ENCODE measurements at regions of chr1 and their contacts with region 1.

Region 1: DNA sequence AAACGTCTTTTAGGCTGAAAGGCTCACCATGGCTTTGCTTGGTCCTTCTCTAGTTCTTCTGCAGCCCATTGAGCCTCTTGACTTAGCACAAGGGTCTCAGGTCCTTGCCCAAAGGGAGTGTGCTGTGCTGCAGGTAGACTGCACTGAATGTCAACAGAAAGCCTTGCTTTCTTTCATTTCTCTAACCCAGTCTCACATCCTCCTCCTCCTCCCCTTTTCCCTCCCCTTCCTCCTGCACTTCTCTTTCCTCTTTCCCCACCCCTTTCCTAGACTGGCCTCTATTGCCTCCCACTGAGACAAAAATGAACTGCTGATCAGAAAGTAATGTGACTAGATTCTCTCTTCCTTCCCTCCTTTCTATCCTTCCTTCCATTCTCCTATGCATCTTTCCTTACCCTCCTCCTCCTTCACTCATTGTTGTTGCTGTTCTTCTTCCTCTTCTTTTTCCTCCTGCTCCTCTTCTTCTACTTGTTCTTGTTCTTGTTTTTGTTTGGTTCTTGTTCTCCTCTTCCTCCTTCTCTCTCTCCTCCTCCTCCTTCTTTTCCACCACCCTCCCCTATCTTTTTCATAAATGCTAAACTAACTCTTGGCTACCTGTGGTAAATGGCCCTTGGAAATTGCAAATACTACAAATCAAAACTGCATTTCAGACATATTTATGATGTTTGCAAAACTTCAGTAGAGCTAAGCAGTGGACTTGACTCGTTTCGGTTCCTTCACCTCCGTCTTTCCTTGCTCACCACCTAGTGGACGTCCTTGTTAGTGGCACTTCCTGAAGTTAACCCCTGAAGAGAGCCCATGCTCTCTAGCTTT is at the start of gene SELL:
- DNase-seq: peak; percentile 48 to 81
- ATAC-seq: peak; percentile 99 to 100
- H3K4me3 ChIP-seq: peak within 1 kb of the TSS; percentile 13
- H3K27ac ChIP-seq: 0 out of 6 replicates have a peak within 1 kb of the TSS, but pooled peaks of 1 of the 2 experiments have one; percentile 11
- H3K4me1 ChIP-seq: no peaks in the 10 kb centered on the region
- CTCF ChIP-seq: peak; percentile 73
- EP300 ChIP-seq: no peak
- POLR2A ChIP-seq: no peak
- RAD21 ChIP-seq: peak; percentile 74 to 84
- polyA plus RNA-seq, gene SELL: 0.22 and 0.39 TPM in 2 replicates

Region 2: GRCh38 chr1:169601093-169601881 is 110.4 kb before region 1 on chr1:
- CTCF ChIA-PET with region 1: interaction called, 26 read pairs
- POLR2A ChIA-PET with region 1: no interaction called
- DNase-seq: peak; percentile 6 to 29
- ATAC-seq: peak; percentile 80; a peak in 4 of 6 replicates
- H3K4me3 ChIP-seq: no peak overlapping the region
- H3K27ac ChIP-seq: no peak overlapping the region
- H3K4me1 ChIP-seq: no peaks in the 10 kb centered on the region
- CTCF ChIP-seq: peak; percentile 59
- EP300 ChIP-seq: no peak
- POLR2A ChIP-seq: no peak
- RAD21 ChIP-seq: peak; percentile 54 to 62

Region 3: DNA sequence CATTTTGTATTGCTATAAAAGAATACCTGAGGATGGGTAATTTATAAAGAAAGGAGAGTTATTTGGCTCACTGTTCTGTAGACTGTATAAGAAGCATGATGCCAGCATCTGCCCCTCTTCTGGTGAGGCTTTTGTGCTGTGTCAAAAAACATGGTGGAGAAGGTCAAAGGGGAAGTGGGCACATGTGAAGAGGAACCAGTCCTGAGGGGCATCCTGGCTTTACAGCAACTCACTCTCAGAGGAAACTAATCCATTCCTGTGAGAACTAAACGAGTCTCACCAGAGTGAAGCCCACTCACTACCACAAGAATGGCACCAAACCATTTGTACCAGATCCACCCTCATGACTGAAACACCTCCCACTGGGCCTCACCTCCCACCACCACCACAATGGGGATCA is 63.0 kb before region 1 on chr1:
- CTCF ChIA-PET with region 1: no interaction called
- POLR2A ChIA-PET with region 1: no interaction called
- DNase-seq: no peak
- ATAC-seq: no peak
- H3K4me3 ChIP-seq: no peak overlapping the region
- H3K27ac ChIP-seq: no peak overlapping the region
- H3K4me1 ChIP-seq: no peaks in the 10 kb centered on the region
- CTCF ChIP-seq: no peak
- EP300 ChIP-seq: no peak
- POLR2A ChIP-seq: no peak
- RAD21 ChIP-seq: no peak

Region 4: DNA sequence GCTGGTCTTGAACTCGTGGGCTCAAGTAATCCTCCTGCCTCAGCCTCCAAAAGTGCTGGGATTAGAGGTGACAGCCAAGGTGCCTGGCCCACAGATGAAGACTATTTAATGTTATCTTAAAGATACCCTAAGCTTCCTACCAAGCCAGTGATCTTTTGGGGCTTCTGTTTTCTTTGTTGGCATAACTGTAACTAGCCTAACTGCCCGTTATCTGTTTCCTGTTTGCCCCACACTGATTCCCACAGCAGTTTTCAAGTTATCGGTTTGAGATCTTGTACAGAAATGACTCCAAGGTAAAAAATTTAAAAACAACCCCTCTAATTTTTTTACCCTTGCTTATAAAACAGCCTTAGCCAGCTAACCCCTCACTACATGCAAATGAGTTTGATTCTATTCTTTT is 12.7 kb before region 1 on chr1:
- CTCF ChIA-PET with region 1: interaction called, 13 read pairs
- POLR2A ChIA-PET with region 1: no interaction called
- DNase-seq: no peak
- ATAC-seq: no peak
- H3K4me3 ChIP-seq: no peak overlapping the region
- H3K27ac ChIP-seq: no peak overlapping the region
- H3K4me1 ChIP-seq: no peaks in the 10 kb centered on the region
- CTCF ChIP-seq: no peak
- EP300 ChIP-seq: no peak
- POLR2A ChIP-seq: no peak
- RAD21 ChIP-seq: no peak

Region 5: DNA sequence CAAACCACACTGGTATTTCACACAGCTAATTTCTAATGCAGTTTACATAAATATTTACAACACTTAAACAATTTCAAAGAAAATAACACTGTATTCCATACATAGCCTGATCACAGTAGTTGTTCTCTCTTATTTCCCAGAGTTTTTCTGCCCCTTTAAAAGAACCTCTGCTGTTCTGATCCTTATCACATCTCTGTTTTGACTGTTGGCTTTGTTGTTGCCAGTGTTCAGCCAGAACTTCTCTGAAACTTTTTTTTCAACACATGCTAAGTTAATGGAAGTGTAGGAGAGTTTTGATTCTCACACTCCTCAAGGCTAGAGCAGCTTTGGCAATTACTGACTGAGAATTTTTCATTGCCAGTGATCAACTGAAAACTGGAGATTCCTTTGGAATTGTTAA is 11.1 kb after region 1 on chr1:
- CTCF ChIA-PET with region 1: interaction called, 13 read pairs
- POLR2A ChIA-PET with region 1: no interaction called
- DNase-seq: no peak
- ATAC-seq: no peak
- H3K4me3 ChIP-seq: no peak overlapping the region
- H3K27ac ChIP-seq: no peak overlapping the region
- H3K4me1 ChIP-seq: no peaks in the 10 kb centered on the region
- CTCF ChIP-seq: no peak
- EP300 ChIP-seq: no peak
- POLR2A ChIP-seq: no peak
- RAD21 ChIP-seq: no peak

Region 6: GRCh38 chr1:169995993-169996392 is 284.3 kb after region 1 on chr1:
- CTCF ChIA-PET with region 1: no interaction called
- POLR2A ChIA-PET with region 1: no interaction called
- DNase-seq: no peak
- ATAC-seq: no peak
- H3K4me3 ChIP-seq: no peak overlapping the region
- H3K27ac ChIP-seq: no peak overlapping the region
- H3K4me1 ChIP-seq: 0 out of 3 replicates have a peak, but pooled peaks cover 4% of the 10 kb centered on the region
- CTCF ChIP-seq: no peak
- EP300 ChIP-seq: no peak
- POLR2A ChIP-seq: no peak
- RAD21 ChIP-seq: no peak